Natural killer cell (primary cell): ENCODE measurements at regions of chr15 and their contacts with region 1.

Region 1: DNA sequence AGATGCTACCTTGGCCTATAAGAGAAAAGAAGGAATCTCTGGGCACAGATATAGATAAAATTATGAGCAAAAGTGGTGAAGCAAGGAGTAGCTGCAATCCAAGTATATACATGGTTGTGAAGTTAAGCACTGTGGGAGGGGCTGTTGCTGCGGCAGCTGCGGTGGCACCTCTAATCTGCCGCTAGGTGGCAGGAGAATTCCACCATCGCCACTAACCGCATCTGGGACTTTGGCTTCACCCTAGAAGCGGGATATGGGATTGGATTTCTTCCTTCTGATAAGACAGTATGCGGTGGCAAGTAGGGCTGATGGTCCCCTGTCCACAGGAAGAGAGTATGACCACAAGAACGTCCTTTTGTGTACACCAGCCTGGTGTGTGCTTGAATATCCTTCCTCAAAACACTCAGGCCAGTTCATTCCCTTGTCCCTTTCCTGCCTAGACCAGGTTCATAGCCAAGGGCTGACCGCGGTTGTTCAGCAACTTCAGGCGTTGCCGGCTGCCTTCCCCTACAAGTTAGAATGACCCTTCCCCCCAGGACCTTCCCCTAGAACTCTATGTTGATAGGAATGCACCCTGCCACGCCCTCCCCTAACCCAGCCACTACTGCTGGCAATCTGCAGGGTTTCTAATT is 5.1 kb downstream of the MAGEL2 start:
- DNase-seq: peak in 1 of 2 donors; percentile 55
- ATAC-seq: peak in 1 of 3 donors; percentile 52
- H3K4me3 ChIP-seq: no peak overlapping the region
- H3K4me3 Mint-ChIP-seq: no peak overlapping the region
- H3K27ac ChIP-seq: no peak overlapping the region
- H3K27ac Mint-ChIP-seq: no peak overlapping the region
- H3K4me1 ChIP-seq: no peaks in the 10 kb centered on the region
- H3K4me1 Mint-ChIP-seq: no peaks in the 10 kb centered on the region
- H3K27me3 ChIP-seq: no peaks in the 10 kb centered on the region
- H3K27me3 Mint-ChIP-seq: peaks cover 0 to 3% of the 10 kb centered on the region in 2 donors
- CTCF ChIP-seq: peak; percentile 39

Region 2: GRCh38 chr15:23594254-23594770 is 48.2 kb before region 1 on chr15:
- intact Hi-C with region 1: loop called (anchors 5 kb)
- DNase-seq: no peak
- ATAC-seq: no peak
- H3K4me3 ChIP-seq: no peak overlapping the region
- H3K4me3 Mint-ChIP-seq: no peak overlapping the region
- H3K27ac ChIP-seq: no peak overlapping the region
- H3K27ac Mint-ChIP-seq: no peak overlapping the region
- H3K4me1 ChIP-seq: no peaks in the 10 kb centered on the region
- H3K4me1 Mint-ChIP-seq: no peaks in the 10 kb centered on the region
- H3K27me3 ChIP-seq: no peaks in the 10 kb centered on the region
- H3K27me3 Mint-ChIP-seq: no peaks in the 10 kb centered on the region
- CTCF ChIP-seq: no peak

Region 3: GRCh38 chr15:23695282-23695681 is 52.8 kb after region 1 on chr15:
- intact Hi-C with region 1: no loop called
- DNase-seq: no peak
- ATAC-seq: no peak
- H3K4me3 ChIP-seq: no peak overlapping the region
- H3K4me3 Mint-ChIP-seq: no peak overlapping the region
- H3K27ac ChIP-seq: no peak overlapping the region
- H3K27ac Mint-ChIP-seq: no peak overlapping the region
- H3K4me1 ChIP-seq: no peaks in the 10 kb centered on the region
- H3K4me1 Mint-ChIP-seq: no peaks in the 10 kb centered on the region
- H3K27me3 ChIP-seq: no peaks in the 10 kb centered on the region
- H3K27me3 Mint-ChIP-seq: no peaks in the 10 kb centered on the region
- CTCF ChIP-seq: no peak

Region 4: GRCh38 chr15:23734862-23735261 is 92.3 kb after region 1 on chr15:
- intact Hi-C with region 1: no loop called
- DNase-seq: no peak
- ATAC-seq: no peak
- H3K4me3 ChIP-seq: no peak overlapping the region
- H3K4me3 Mint-ChIP-seq: no peak overlapping the region
- H3K27ac ChIP-seq: no peak overlapping the region
- H3K27ac Mint-ChIP-seq: no peak overlapping the region
- H3K4me1 ChIP-seq: no peaks in the 10 kb centered on the region
- H3K4me1 Mint-ChIP-seq: no peaks in the 10 kb centered on the region
- H3K27me3 ChIP-seq: no peaks in the 10 kb centered on the region
- H3K27me3 Mint-ChIP-seq: no peaks in the 10 kb centered on the region
- CTCF ChIP-seq: no peak

Region 5: DNA sequence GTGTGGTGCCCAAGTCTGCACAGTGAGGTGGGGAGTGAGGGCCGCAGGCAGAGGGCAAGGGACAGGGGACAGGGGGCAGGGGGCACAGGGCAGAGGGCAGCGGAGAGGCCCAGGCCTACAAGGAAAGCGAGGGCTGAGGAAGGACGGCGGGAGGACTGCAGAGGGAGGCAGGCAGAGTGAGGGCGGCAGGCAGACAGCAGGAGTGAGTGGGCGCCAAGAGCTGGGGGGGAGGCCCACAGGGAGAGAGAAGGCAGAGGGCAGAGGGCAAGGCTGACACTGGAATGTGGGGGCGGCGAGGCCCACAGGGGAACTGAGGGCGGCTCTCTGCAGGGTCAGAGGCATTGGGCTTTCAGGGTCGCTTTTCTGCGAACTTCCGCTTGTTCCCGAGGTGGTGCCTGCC is 312.4 kb after region 1 on chr15:
- intact Hi-C with region 1: no loop called
- DNase-seq: no peak
- ATAC-seq: no peak
- H3K4me3 ChIP-seq: no peak overlapping the region
- H3K4me3 Mint-ChIP-seq: no peak overlapping the region
- H3K27ac ChIP-seq: no peak overlapping the region
- H3K27ac Mint-ChIP-seq: no peak overlapping the region
- H3K4me1 ChIP-seq: no peaks in the 10 kb centered on the region
- H3K4me1 Mint-ChIP-seq: no peaks in the 10 kb centered on the region
- H3K27me3 ChIP-seq: no peaks in the 10 kb centered on the region
- H3K27me3 Mint-ChIP-seq: no peaks in the 10 kb centered on the region
- CTCF ChIP-seq: no peak

Region 6: GRCh38 chr15:25501828-25502446 is 1859.4 kb after region 1 on chr15:
- intact Hi-C with region 1: loop called (anchors 5 kb)
- DNase-seq: peak in 1 of 2 donors; percentile 56
- ATAC-seq: no peak
- H3K4me3 ChIP-seq: no peak overlapping the region
- H3K4me3 Mint-ChIP-seq: no peak overlapping the region
- H3K27ac ChIP-seq: no peak overlapping the region
- H3K27ac Mint-ChIP-seq: no peak overlapping the region
- H3K4me1 ChIP-seq: no peaks in the 10 kb centered on the region
- H3K4me1 Mint-ChIP-seq: no peaks in the 10 kb centered on the region
- H3K27me3 ChIP-seq: no peaks in the 10 kb centered on the region
- H3K27me3 Mint-ChIP-seq: peaks cover 0 to under 1% of the 10 kb centered on the region in 2 donors
- CTCF ChIP-seq: peak; percentile 11